Activated naive CD4-positive, alpha-beta T cell treated with anti-CD3 and anti-CD28 coated beads for 36 hours (primary cell): ENCODE measurements at regions of chr5 and their contacts with region 1.

Region 1: DNA sequence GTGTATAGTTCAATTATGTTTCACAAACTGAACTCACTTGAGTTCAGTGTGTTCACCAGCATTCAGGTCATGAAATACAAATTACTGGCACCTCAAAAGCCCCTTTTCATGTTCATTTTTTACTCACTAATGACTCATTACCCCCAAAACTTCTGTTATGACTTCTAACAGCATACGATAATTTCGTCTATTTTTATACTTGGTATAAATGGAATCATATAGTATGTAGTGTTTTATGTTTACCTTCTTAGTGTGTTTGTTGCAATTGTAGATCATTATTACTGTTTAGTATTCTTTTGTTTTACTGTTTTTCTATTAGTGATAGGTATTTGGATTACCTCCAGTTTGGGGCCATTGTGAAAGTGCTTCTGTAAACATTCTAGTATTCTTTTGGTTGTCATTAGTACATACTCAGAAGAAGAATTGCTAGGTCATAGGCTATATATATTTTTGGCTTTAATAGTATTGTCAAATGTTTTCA is 33.4 kb downstream of the DDX4 start:
- DNase-seq: no peak
- H3K4me3 Mint-ChIP-seq: no peak overlapping the region
- H3K27ac Mint-ChIP-seq: no peak overlapping the region
- H3K4me1 Mint-ChIP-seq: peaks cover 12% of the 10 kb centered on the region
- H3K27me3 Mint-ChIP-seq: no peaks in the 10 kb centered on the region

Region 2: DNA sequence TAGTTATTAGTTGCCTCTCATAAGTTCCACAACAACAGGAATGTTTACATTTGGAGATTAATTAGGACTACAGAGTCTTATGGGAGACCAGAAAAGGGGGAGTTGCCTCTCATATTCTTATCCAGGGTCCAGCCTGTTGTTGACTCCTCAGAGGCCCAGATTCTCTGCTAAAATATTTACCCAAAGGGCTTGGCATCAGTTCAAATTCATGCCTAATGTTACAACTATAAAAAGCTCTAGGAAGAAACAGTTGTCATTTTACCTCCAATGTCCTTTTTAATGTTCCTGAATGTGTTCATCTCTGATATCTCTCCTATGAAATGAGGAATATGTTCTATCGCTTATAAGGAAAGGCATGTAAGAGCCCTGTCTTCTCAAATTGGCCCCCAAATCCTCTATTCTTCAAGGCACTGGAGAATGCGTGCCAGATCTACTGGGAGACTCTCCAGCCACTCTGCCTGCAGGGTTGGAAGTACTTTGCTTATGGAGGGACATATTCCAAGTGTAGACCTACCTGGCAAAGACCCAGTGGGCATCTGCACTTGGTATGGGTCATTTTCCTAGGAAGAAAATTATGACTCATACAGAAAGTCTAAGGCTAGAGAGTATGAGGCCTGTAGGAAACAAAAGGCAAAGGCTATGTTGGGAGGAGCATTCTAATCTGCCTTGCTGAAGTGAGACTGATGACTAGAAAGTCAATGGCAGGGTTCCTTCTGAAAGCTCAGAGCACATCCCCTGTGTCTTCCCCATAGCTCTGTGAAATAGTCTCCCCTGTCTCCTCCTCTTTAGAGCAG is 978.4 kb before region 1 on chr5:
- CTCF ChIA-PET with region 1: no interaction called
- intact Hi-C with region 1: no loop called
- DNase-seq: no peak
- H3K4me3 Mint-ChIP-seq: no peak overlapping the region
- H3K27ac Mint-ChIP-seq: no peak overlapping the region
- H3K4me1 Mint-ChIP-seq: peaks cover 19% of the 10 kb centered on the region
- H3K27me3 Mint-ChIP-seq: peaks cover 5% of the 10 kb centered on the region

Region 3: DNA sequence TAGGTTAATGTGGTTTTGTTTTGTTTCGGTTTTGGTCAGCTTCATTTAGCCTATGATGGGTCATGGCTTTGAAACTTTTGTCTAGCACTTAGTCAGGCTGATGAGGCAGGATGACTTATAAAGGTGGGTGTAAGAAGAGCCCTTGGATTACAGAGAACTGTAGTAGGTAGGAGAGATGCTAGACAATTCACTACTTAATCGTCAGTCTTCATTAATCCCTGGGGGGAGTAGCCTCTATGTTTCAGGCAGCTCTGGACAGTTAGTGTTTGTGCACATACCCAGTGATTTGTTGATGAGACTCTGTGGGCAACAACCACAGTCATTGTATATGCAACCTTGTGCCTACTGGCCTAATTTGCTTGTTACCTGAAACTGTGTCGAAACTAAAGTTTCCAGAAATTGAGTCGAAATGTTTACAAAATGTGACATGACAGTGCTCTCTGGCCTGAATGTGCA is 350.1 kb before region 1 on chr5:
- CTCF ChIA-PET with region 1: no interaction called
- intact Hi-C with region 1: loop called (anchors 1 kb)
- DNase-seq: peak; percentile 49
- H3K4me3 Mint-ChIP-seq: no peak overlapping the region
- H3K27ac Mint-ChIP-seq: no peak overlapping the region
- H3K4me1 Mint-ChIP-seq: peaks cover 33% of the 10 kb centered on the region
- H3K27me3 Mint-ChIP-seq: no peaks in the 10 kb centered on the region

Region 4: GRCh38 chr5:55758231-55758630 is 13.0 kb before region 1 on chr5:
- CTCF ChIA-PET with region 1: interaction called, 5 read pairs
- intact Hi-C with region 1: loop called (anchors 1 kb)
- DNase-seq: no peak
- H3K4me3 Mint-ChIP-seq: no peak overlapping the region
- H3K27ac Mint-ChIP-seq: peak overlapping the region; percentile 64
- H3K4me1 Mint-ChIP-seq: peaks cover 9% of the 10 kb centered on the region
- H3K27me3 Mint-ChIP-seq: peaks cover 3% of the 10 kb centered on the region

Region 5: GRCh38 chr5:55856516-55857246 is 85.5 kb after region 1 on chr5:
- CTCF ChIA-PET with region 1: no interaction called
- intact Hi-C with region 1: loop called (anchors 1 kb)
- DNase-seq: peak; percentile 56
- H3K4me3 Mint-ChIP-seq: no peak overlapping the region
- H3K27ac Mint-ChIP-seq: peak overlapping the region; percentile 54
- H3K4me1 Mint-ChIP-seq: peaks cover 41% of the 10 kb centered on the region
- H3K27me3 Mint-ChIP-seq: no peaks in the 10 kb centered on the region

Region 6: GRCh38 chr5:55903121-55903701 is 132.0 kb after region 1 on chr5:
- CTCF ChIA-PET with region 1: no interaction called
- intact Hi-C with region 1: loop called (anchors 2 kb)
- DNase-seq: peak; percentile 84
- H3K4me3 Mint-ChIP-seq: no peak overlapping the region
- H3K27ac Mint-ChIP-seq: no peak overlapping the region
- H3K4me1 Mint-ChIP-seq: peaks cover 25% of the 10 kb centered on the region
- H3K27me3 Mint-ChIP-seq: peaks cover 4% of the 10 kb centered on the region